ENCODE measurements at regions of chr1 and their contacts with region 1.

Region 1: DNA sequence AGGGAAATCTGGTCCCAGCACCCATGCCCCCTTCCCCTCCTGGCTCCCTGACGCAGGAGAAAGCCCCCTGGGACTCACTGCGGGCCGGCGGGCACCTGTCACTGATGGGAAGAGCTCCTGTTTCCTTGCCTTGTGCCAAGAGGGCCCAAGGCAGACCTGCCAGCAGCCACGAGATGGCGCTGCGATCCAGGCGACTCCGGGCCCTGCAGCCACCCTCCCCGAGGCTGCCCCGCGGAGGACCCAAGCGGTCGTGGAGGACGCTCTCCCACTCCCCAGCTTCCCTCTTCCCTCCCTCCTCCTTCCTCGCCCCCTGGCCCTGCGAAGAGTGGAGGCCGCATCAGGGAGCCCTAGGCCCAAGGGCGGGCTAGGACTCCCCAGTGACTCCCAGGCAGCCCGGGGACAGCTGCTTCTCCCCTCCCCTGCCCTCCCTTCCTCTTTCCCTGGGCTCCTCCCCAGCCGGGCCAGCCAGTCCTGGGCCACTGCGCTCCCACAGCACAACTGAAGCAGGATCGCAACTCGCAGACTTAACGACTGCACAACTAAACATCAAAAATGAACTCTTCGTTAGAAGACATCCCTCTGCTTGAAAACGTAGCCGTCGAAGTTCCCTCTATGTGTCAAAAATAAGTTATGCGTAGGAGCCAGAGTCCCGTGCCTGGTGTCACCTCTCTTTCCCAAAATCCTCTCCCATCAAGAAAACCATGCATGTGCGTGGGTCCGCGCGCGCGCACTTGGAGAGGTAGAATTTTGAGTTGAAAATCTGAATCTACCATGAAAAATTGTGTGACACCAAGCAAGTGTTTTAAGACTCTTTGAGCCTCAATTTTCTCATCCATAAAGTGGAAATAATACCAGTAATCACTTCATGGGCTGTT is 34.2 kb downstream of the BATF3 start:
- DNase-seq: peak; percentile 77
- ATAC-seq: peak; percentile 91
- H3K4me3 ChIP-seq: peak overlapping the region; percentile 66
- H3K27ac ChIP-seq: peak overlapping the region; percentile 72
- H3K4me1 ChIP-seq: peaks cover 7% of the 10 kb centered on the region
- H3K27me3 ChIP-seq: no peaks in the 10 kb centered on the region
- CTCF ChIP-seq: peak; percentile 93
- POLR2A ChIP-seq: peak; percentile 53
- RAD21 ChIP-seq: peak; percentile 95

Region 2: DNA sequence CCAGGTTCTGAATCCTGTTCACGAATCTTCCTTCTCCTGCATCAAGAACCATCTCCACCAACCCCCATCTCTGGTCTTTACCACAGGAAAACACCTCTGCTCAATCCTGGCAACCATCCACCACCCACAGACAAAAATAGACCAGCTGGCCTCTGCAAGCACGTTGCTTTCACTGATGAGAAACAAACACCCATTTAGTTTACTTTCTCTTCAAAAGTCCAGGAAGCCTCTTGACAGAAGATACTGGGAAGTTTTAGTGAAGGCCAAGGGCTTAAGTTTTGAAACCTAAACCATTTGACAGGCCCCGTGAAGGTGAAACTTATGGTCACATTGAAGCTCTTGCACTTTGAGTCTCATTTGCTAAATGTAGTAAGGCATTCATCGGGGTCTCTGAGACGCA is 502.8 kb before region 1 on chr1:
- CTCF ChIA-PET with region 1: no interaction called
- POLR2A ChIA-PET with region 1: no interaction called
- dilution Hi-C with region 1: no loop called
- in situ Hi-C with region 1: no loop called
- intact Hi-C with region 1: no loop called
- DNase-seq: peak; percentile 80
- ATAC-seq: peak; percentile 27
- H3K4me3 ChIP-seq: no peak overlapping the region
- H3K27ac ChIP-seq: no peak overlapping the region
- H3K4me1 ChIP-seq: peaks cover 12% of the 10 kb centered on the region
- H3K27me3 ChIP-seq: no peaks in the 10 kb centered on the region
- CTCF ChIP-seq: no peak
- POLR2A ChIP-seq: no peak
- RAD21 ChIP-seq: no peak

Region 3: GRCh38 chr1:212477014-212477679 is 188.3 kb before region 1 on chr1:
- CTCF ChIA-PET with region 1: interaction called, 5 read pairs
- POLR2A ChIA-PET with region 1: interaction called, 5 read pairs
- dilution Hi-C with region 1: no loop called
- in situ Hi-C with region 1: no loop called
- intact Hi-C with region 1: loop called (anchors 1 kb)
- DNase-seq: peak; percentile 86
- ATAC-seq: peak; percentile 98
- H3K4me3 ChIP-seq: no peak overlapping the region
- H3K27ac ChIP-seq: no peak overlapping the region
- H3K4me1 ChIP-seq: peaks cover 3% of the 10 kb centered on the region
- H3K27me3 ChIP-seq: peaks cover 4% of the 10 kb centered on the region; the same call in 1 of the 2 replicates
- CTCF ChIP-seq: peak; percentile 95
- POLR2A ChIP-seq: peak; percentile 56
- RAD21 ChIP-seq: peak; percentile 97

Region 4: DNA sequence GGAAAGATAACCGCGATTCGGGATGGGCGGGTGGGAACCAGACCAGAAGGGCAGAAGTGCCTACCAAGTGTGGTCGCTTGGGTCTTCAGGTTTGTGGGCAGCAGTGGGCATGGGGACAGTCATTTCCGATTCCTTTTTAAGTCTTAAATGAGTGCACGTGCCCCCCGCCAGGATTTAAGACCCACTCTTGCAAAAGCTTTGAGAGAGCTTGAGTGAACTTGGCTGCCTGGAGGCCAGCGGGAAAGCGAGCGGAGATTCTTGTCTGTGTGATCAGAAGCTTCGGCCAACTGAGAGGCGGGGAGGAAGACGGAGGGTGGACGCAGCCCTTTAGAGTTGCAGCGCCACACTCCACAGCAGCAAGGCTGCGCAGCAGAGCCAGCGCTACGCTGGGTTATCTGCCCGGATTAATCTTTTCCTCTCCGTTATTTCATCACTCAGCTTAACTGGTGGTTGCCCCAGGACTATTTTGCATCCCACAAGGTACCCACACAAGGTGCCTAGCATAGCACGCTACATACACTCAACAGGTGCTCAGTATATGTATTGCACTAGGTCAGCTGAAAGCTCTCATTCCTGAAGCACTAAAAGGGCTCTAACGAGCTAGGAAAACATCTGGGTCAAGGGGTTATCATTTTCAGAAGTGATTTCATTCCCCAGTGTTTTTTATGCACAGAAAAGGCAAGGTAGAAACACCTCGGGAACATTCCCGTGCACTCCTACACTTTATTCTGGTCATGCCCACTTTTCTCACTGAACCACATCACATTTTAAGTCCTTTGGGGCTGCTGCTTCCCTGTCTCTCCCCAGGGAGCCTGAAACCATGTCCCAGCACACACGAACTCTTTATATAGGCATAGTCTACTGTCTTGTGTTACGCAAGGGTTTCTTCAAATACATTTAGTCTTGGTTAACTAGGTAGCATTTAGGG is 35.7 kb after region 1 on chr1:
- CTCF ChIA-PET with region 1: interaction called, 5 read pairs
- POLR2A ChIA-PET with region 1: interaction called, 5 read pairs
- dilution Hi-C with region 1: no loop called
- in situ Hi-C with region 1: no loop called
- intact Hi-C with region 1: loop called (anchors 2 kb)
- DNase-seq: peak; percentile 62
- ATAC-seq: peak; percentile 67
- H3K4me3 ChIP-seq: peak overlapping the region; percentile 73
- H3K27ac ChIP-seq: no peak overlapping the region; the same call in 1 of the 2 replicates
- H3K4me1 ChIP-seq: peaks cover 3% of the 10 kb centered on the region; the same call in 1 of the 2 replicates
- H3K27me3 ChIP-seq: no peaks in the 10 kb centered on the region
- CTCF ChIP-seq: 0 out of 2 replicates have a peak, but pooled peaks have one; percentile 20
- POLR2A ChIP-seq: no peak
- RAD21 ChIP-seq: peak; percentile 21; the same call in 1 of the 2 replicates

Region 5: DNA sequence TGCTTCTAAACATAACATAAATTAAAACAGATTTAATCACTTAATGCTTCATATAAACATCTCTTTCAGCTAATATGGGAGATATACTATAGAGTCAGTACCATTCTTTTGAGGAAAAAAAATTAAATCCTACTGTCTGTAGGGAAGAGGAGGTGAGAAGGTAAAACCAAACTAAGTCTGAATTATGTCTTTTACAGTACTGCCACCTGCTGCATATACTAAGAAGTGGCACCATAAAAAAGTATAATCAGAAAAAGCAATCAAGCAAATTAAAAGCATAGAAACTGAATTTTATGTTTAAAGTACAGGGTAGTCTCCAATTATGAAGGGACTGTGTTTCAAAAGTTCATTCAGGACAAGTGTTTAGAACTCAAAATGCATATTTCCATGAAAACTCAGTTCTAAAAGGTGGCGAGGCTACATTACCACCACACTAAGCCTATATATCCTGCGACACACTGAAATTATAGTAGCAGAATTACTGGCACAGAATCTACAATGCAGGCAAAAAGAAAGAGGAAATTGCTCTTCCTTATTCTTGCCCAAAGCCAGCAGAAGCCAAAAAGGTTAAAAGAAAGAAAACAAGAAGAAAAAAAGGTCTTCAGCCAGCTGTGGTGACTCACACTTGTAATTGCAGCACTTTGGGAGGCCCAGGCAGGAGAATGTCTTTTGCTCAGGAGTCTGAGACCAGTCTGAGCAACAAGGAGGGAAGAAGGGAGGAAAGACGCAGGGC is 117.1 kb after region 1 on chr1:
- CTCF ChIA-PET with region 1: interaction called, 6 read pairs
- POLR2A ChIA-PET with region 1: no interaction called
- dilution Hi-C with region 1: no loop called
- in situ Hi-C with region 1: loop called (anchors 10 kb)
- intact Hi-C with region 1: loop called (anchors 1 kb)
- DNase-seq: peak; percentile 69
- ATAC-seq: peak; percentile 81
- H3K4me3 ChIP-seq: no peak overlapping the region
- H3K27ac ChIP-seq: no peak overlapping the region
- H3K4me1 ChIP-seq: 0 out of 2 replicates have a peak, but pooled peaks cover 2% of the 10 kb centered on the region
- H3K27me3 ChIP-seq: no peaks in the 10 kb centered on the region
- CTCF ChIP-seq: peak; percentile 72
- POLR2A ChIP-seq: no peak
- RAD21 ChIP-seq: peak; percentile 77

Region 6: DNA sequence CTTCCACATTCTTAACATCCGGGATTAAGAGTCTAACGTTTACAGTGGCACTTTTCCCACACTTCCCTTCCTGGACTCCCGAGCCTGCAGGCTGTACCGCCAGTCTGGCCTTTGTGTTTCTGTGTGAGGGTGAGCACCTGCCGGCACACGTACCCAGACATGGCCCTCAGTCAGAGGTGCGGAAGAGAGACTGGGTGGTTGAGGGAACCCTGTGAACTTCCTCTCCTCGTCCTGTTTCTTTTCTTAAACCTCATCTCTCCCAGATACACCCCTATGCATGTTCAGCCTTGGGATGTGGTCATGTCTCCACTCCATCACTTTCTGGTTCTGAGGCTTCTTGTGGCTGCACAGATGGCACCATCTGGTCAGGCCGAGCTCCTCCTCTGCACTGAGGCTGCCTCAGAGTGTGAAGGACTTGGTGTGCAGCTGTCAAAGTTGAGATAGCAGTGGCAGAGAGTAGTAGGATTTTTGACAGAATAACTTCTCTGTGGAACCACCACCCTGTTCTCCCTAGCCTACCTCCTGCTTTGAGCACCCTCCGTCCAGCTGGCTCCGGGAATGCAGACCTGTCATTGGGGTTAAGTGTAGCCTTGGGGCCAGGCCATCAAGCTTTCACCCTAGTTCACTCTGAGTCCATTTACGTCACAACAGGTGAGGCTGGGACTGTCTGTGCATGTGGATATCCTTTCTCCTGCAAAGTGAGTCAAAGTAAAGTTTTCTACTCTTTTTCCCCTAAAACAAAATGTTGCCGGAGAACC is 316.3 kb after region 1 on chr1:
- CTCF ChIA-PET with region 1: no interaction called
- POLR2A ChIA-PET with region 1: no interaction called
- dilution Hi-C with region 1: no loop called
- in situ Hi-C with region 1: loop called (anchors 25 kb)
- intact Hi-C with region 1: no loop called
- DNase-seq: peak; percentile 13
- ATAC-seq: no peak; the same call in 1 of the 2 replicates
- H3K4me3 ChIP-seq: no peak overlapping the region
- H3K27ac ChIP-seq: no peak overlapping the region
- H3K4me1 ChIP-seq: peaks cover 11% of the 10 kb centered on the region; the same call in 1 of the 2 replicates
- H3K27me3 ChIP-seq: no peaks in the 10 kb centered on the region
- CTCF ChIP-seq: no peak
- POLR2A ChIP-seq: no peak
- RAD21 ChIP-seq: no peak

Measured in IMR-90 (cell line).